Psoas muscle (tissue), 8 donors: ENCODE measurements at regions of chr11 and their contacts with region 1.

Region 1: GRCh38 chr11:72141066-72141465 is 5.5 kb downstream of the FOLR3 start:
- DNase-seq: no peak
- ATAC-seq: no peak
- H3K4me3 ChIP-seq: no peak overlapping the region
- H3K27ac ChIP-seq: no peak overlapping the region
- H3K4me1 ChIP-seq: no peaks in the 10 kb centered on the region
- H3K27me3 ChIP-seq: no peaks in the 10 kb centered on the region
- CTCF ChIP-seq: no peak

Region 2: GRCh38 chr11:72024069-72024754 is 116.9 kb before region 1 on chr11:
- intact Hi-C with region 1: loop called in 1 of 2 experiments (anchors 1 kb)
- DNase-seq: no peak
- ATAC-seq: no peak
- H3K4me3 ChIP-seq: no peak overlapping the region
- H3K27ac ChIP-seq: peak overlapping the region; percentile 50
- H3K4me1 ChIP-seq: peaks cover 29% of the 10 kb centered on the region
- H3K27me3 ChIP-seq: no peaks in the 10 kb centered on the region
- CTCF ChIP-seq: no peak

Region 3: GRCh38 chr11:72048766-72049456 is 92.2 kb before region 1 on chr11:
- intact Hi-C with region 1: no loop called
- DNase-seq: no peak
- ATAC-seq: no peak
- H3K4me3 ChIP-seq: no peak overlapping the region
- H3K27ac ChIP-seq: peak overlapping the region; percentile 36
- H3K4me1 ChIP-seq: no peaks in the 10 kb centered on the region
- H3K27me3 ChIP-seq: no peaks in the 10 kb centered on the region
- CTCF ChIP-seq: no peak

Region 4: GRCh38 chr11:72179804-72180396 is 38.8 kb after region 1 on chr11:
- intact Hi-C with region 1: loop called in 1 of 2 experiments (anchors 2 kb)
- DNase-seq: no peak
- ATAC-seq: no peak
- H3K4me3 ChIP-seq: no peak overlapping the region
- H3K27ac ChIP-seq: no peak overlapping the region
- H3K4me1 ChIP-seq: no peaks in the 10 kb centered on the region
- H3K27me3 ChIP-seq: no peaks in the 10 kb centered on the region
- CTCF ChIP-seq: no peak